Mammary epithelial cell (primary cell): ENCODE measurements at regions of chr17 and their contacts with region 1.

Region 1: DNA sequence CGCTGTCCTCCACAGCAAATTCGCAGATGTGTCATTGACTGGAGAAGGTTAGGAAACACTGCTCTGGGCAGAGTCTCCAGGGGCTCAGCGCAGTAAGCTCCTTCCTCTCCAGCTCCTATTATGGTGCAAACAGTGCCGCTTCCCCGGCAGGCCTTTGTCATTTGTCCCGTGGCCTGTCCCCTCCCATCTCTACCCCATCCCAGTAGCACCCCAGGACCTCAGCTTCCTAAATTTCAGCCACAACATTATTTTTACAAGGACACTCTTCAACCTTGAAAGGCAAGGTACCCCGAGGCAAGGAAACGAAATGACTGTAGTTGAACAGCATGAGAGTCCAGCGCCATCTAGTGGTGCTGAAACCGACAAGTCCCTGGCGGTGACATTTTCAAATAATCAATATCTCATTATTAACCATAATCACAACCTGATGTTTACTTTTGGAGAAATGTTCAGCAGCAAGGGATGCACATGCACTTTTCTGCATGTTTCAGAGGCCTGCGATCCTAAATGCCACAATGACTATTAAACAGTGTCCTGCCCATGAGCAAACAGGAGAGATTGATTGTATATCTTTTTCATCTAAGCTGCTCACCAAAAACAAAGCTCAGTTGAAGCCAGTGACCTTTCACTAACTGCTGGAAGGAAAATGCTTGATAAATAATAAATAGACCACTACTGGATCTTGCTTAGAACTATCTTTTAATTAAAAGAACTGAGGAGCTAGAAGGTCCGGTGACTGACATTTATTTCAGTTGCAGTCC is 16.5 kb downstream of the MRPS23 start:
- DNase-seq: peak; percentile 41
- H3K4me3 ChIP-seq: peak overlapping the region in 1 of 3 experiments; percentile 25
- H3K27ac ChIP-seq: no peak overlapping the region
- H3K4me1 ChIP-seq: peaks cover 4% of the 10 kb centered on the region
- H3K27me3 ChIP-seq: no peaks in the 10 kb centered on the region
- CTCF ChIP-seq: peak; percentile 90 to 97

Region 2: GRCh38 chr17:57243171-57243948 is 590.0 kb before region 1 on chr17:
- CTCF ChIA-PET with region 1: no interaction called
- dilution Hi-C with region 1: no loop called
- in situ Hi-C with region 1: no loop called
- intact Hi-C with region 1: loop called (anchors 5 kb)
- DNase-seq: peak; percentile 45
- H3K4me3 ChIP-seq: no peak overlapping the region
- H3K27ac ChIP-seq: no peak overlapping the region
- H3K4me1 ChIP-seq: no peaks in the 10 kb centered on the region
- H3K27me3 ChIP-seq: no peaks in the 10 kb centered on the region
- CTCF ChIP-seq: peak; percentile 100

Region 3: DNA sequence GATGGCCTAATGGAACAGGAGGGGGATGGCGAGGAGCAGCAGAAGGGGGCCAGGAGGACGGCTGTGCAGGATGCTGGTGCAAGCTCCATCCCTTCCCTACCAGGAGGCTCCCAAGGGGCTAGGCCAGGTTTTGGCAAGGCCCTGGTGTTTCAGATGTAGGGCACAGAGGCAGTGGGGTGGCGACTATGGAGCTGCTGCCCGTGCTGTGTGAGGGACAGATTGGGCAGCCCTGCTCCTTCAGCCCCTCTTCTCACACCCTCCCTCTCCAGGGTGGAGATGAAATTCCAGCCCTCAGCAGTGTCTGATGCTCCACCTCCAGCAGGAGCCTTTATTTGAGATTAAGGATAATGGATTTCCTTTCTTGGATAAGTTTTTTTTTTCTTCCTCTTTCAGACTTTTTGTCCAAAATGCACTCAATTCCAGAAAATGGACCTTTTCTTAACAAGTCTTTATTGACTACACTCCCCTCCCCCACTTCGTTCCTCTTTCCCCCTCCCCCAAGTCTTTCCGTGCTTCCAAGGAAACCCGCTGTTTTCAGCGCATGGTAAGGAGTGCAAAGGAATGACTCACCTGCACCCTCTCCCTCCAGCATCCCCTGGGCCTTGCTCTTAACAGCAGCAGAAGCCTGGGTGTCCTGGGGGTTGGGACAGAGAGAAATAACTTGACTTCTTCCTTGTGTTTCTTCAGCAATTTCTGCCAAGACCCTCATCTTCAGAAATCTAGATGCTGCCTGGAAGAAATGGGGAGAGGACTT is 183.5 kb before region 1 on chr17:
- CTCF ChIA-PET with region 1: no interaction called
- dilution Hi-C with region 1: no loop called
- in situ Hi-C with region 1: no loop called
- intact Hi-C with region 1: no loop called
- DNase-seq: no peak
- H3K4me3 ChIP-seq: no peak overlapping the region
- H3K27ac ChIP-seq: no peak overlapping the region
- H3K4me1 ChIP-seq: peaks cover 3% of the 10 kb centered on the region
- H3K27me3 ChIP-seq: no peaks in the 10 kb centered on the region
- CTCF ChIP-seq: no peak

Region 4: DNA sequence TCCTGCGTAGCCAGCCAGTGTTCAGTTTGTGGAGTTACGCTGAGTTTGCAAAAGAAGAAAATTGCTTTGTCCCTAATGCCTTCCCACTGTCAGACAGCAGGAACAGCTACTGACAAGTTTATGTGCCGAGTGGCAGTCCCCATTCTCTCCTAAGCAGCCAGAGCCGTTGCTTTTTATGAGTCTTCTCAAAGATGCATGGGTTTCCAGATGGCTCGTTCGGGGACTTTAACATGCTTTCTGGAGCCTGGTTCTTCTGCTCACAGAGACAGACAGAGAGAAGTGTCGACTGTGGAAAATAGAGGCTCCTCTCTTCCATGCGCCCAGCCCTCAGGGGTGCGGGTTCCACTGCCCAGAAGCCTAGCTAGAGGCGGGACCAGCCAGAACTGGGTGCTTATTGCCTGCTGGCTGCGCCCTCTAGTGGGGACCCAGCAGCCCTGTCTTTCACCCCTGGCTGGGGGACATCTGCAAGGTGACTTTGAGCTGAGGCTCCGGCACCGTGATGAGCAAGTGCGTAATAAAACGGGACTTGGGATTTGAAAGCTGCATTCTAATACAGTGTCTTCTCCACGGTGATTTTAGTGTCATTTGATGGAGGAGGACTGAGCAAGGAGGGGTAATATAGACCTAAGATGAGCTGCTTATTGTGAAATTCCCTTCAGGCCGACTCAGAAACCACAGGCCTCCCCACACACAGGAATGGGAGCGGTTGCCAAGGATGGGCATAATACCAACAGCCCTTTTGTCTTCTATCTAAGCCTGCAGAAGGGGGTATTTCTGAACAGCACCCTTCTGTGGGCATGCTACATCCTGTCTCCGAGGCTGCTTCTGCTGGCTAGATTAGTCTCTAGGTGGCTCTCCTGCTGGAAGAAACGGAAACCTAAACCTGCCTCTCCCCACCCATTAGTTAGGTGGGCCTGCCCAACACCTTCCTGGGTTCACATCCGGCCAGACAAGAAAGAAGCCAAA is 161.4 kb before region 1 on chr17:
- CTCF ChIA-PET with region 1: interaction called, 3 read pairs
- dilution Hi-C with region 1: no loop called
- in situ Hi-C with region 1: no loop called
- intact Hi-C with region 1: loop called (anchors 5 kb)
- DNase-seq: peak; percentile 93
- H3K4me3 ChIP-seq: no peak overlapping the region
- H3K27ac ChIP-seq: peak overlapping the region; percentile 71
- H3K4me1 ChIP-seq: peaks cover 25% of the 10 kb centered on the region
- H3K27me3 ChIP-seq: no peaks in the 10 kb centered on the region
- CTCF ChIP-seq: peak; percentile 95

Region 5: GRCh38 chr17:57794841-57795240 is 38.5 kb before region 1 on chr17:
- CTCF ChIA-PET with region 1: no interaction called
- dilution Hi-C with region 1: no loop called
- in situ Hi-C with region 1: no loop called
- intact Hi-C with region 1: no loop called
- DNase-seq: no peak
- H3K4me3 ChIP-seq: no peak overlapping the region
- H3K27ac ChIP-seq: no peak overlapping the region
- H3K4me1 ChIP-seq: no peaks in the 10 kb centered on the region
- H3K27me3 ChIP-seq: no peaks in the 10 kb centered on the region
- CTCF ChIP-seq: no peak

Region 6: GRCh38 chr17:57927048-57927723 is 93.8 kb after region 1 on chr17:
- CTCF ChIA-PET with region 1: no interaction called
- dilution Hi-C with region 1: no loop called
- in situ Hi-C with region 1: no loop called
- intact Hi-C with region 1: no loop called
- DNase-seq: peak; percentile 59
- H3K4me3 ChIP-seq: no peak overlapping the region
- H3K27ac ChIP-seq: no peak overlapping the region
- H3K4me1 ChIP-seq: peaks cover 7% of the 10 kb centered on the region
- H3K27me3 ChIP-seq: no peaks in the 10 kb centered on the region
- CTCF ChIP-seq: no peak